Stomach (tissue), 19 donors: ENCODE measurements at regions of chr4 and their contacts with region 1.

Region 1: DNA sequence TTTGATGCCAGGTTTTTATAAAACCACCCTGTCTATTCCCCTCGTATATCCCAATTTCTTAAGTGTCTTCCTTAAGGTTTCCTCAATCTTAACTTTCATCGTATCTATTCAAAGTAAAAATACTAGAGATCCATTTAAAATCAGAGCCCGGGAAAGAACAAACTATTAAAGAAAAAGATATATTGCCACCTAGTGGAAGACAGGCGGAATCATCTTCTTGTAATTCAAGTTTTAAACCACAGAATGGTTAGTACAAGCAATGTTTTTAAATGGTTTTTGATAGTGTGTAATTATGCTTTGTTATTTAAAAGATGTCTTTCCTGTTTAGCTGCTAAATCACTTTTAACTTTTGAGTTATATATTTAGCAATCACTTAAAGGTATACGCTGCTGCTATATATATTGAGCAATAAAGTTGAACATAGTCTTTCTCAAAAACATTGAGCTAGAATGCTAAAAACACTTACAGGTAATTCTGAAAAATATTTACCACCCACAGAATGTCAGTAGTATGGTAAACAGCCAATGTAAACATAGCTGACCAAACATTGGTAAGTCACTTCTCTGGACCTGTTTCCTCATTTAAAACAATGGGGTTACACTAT is 18.2 kb downstream of the PRDM8 start:
- DNase-seq: peak in 1 of 2 donors; percentile 48
- H3K4me3 ChIP-seq: no peak overlapping the region
- H3K27ac ChIP-seq: no peak overlapping the region
- H3K4me1 ChIP-seq: peaks cover 0 to 10% (median 4%) of the 10 kb centered on the region in 4 donors
- H3K27me3 ChIP-seq: peaks cover 0 to 20% (median 6%) of the 10 kb centered on the region in 3 donors
- CTCF ChIP-seq: peak in 5 of 7 experiments; percentile 38 to 63 (median 57)
- EP300 ChIP-seq: no peak
- POLR2A ChIP-seq: no peak

Region 2: GRCh38 chr4:78939667-78940008 is 1275.9 kb before region 1 on chr4:
- intact Hi-C with region 1: loop called (anchors 10 kb)
- DNase-seq: peak in 1 of 2 donors; percentile 44
- H3K4me3 ChIP-seq: peak overlapping the region; percentile 64 to 83 (median 82)
- H3K27ac ChIP-seq: peak overlapping the region in 3 of 5 donors; percentile 79 to 88 (median 87)
- H3K4me1 ChIP-seq: peaks cover 0 to 33% (median 16%) of the 10 kb centered on the region in 4 donors
- H3K27me3 ChIP-seq: no peaks in the 10 kb centered on the region
- CTCF ChIP-seq: no peak
- EP300 ChIP-seq: no peak
- POLR2A ChIP-seq: no peak